ENCODE measurements at regions of chr4 and their contacts with region 1.

Region 1: GRCh38 chr4:140071806-140072205 is 82.2 kb downstream of the MAML3 start:
- DNase-seq: peak; percentile 33 to 86 (median 53)
- ATAC-seq: peak; percentile 93
- H3K4me3 ChIP-seq: peak overlapping the region; percentile 19
- H3K4me3 Mint-ChIP-seq: peak overlapping the region; percentile 85
- H3K27ac ChIP-seq: no peak overlapping the region
- H3K27ac Mint-ChIP-seq: peak overlapping the region; percentile 94
- H3K4me1 ChIP-seq: peaks cover 35% of the 10 kb centered on the region
- H3K4me1 Mint-ChIP-seq: peaks cover 46% of the 10 kb centered on the region
- H3K27me3 ChIP-seq: no peaks in the 10 kb centered on the region
- H3K27me3 Mint-ChIP-seq: no peaks in the 10 kb centered on the region
- CTCF ChIP-seq: no peak

Region 2: GRCh38 chr4:140049024-140049848 is 22.6 kb before region 1 on chr4:
- CTCF ChIA-PET with region 1: interaction called, 8 read pairs
- POLR2A ChIA-PET with region 1: interaction called, 18 read pairs
- intact Hi-C with region 1: loop called in 1 of 2 experiments (anchors 2 kb)
- DNase-seq: peak; percentile 14 to 72 (median 44)
- ATAC-seq: peak; percentile 99
- H3K4me3 ChIP-seq: peak overlapping the region; percentile 28
- H3K4me3 Mint-ChIP-seq: peak overlapping the region; percentile 83
- H3K27ac ChIP-seq: peak overlapping the region in 1 of 2 donors; percentile 9
- H3K27ac Mint-ChIP-seq: peak overlapping the region; percentile 79
- H3K4me1 ChIP-seq: peaks cover 14% of the 10 kb centered on the region
- H3K4me1 Mint-ChIP-seq: peaks cover 48% of the 10 kb centered on the region
- H3K27me3 ChIP-seq: no peaks in the 10 kb centered on the region
- H3K27me3 Mint-ChIP-seq: no peaks in the 10 kb centered on the region
- CTCF ChIP-seq: no peak

Region 3: DNA sequence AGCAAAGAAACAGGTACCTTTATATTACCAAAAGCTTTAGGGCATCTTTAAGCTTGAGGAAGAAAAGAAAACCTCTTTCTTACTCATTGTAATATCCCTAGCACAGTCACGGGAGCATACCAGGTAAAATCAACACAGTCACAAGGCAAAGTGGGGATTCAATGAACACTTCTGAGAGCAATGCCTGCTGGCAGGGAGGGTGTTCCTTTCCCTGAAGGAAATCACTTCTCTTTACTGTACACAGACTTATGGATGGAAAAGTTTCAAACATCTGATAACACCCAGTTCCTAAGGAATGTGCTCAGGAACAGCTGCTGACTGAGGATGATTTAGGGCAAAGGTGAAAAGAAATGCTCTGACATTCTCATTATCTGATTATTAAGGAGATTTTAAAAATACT is 12.6 kb before region 1 on chr4:
- CTCF ChIA-PET with region 1: interaction called, 4 read pairs
- POLR2A ChIA-PET with region 1: interaction called, 5 read pairs
- intact Hi-C with region 1: loop called in 1 of 2 experiments (anchors 2 kb)
- DNase-seq: no peak
- ATAC-seq: no peak
- H3K4me3 ChIP-seq: no peak overlapping the region
- H3K4me3 Mint-ChIP-seq: no peak overlapping the region
- H3K27ac ChIP-seq: no peak overlapping the region
- H3K27ac Mint-ChIP-seq: no peak overlapping the region
- H3K4me1 ChIP-seq: no peaks in the 10 kb centered on the region
- H3K4me1 Mint-ChIP-seq: peaks cover 46% of the 10 kb centered on the region
- H3K27me3 ChIP-seq: no peaks in the 10 kb centered on the region
- H3K27me3 Mint-ChIP-seq: peaks cover 6% of the 10 kb centered on the region
- CTCF ChIP-seq: no peak